Activated naive CD4-positive, alpha-beta T cell treated with anti-CD3 and anti-CD28 coated beads for 36 hours (primary cell): ENCODE measurements at regions of chr2 and their contacts with region 1.

Region 1: DNA sequence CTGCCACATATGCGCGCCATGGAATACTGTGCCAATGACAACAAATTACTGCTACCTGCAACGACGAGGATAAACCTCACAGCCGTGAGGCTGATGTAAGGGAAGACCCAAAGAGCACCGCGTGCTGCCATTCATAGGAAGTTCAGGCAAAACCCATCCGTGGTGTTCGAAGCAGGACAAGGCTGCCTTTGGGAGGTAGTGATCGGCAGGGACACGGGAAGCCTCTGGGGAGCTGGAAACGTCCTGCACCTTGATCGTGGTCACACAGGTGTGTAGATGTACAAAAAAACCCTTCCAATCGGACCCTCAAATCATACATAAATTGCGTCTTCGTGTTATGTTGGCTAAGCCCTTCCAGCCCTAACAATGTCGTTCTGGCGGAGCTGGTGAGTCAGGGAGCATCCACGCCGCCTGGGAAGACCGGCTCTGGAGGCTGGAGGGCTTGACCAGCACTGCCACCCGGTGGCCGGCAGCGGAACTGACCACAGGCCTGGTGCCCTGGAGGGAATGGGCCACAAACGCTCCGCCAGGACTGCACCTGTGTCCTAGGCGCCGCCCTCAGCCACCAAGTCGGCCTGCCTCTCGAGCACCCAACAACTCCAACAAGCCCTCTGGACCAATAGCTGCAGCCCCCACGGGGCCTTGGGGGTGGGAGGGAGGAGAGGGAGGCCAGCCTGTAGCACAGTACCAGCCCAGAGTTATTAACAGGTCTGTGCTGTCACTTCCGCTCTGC is 4.1 kb upstream of the NEURL3 start:
- DNase-seq: peak; percentile 84
- H3K4me3 Mint-ChIP-seq: no peak overlapping the region
- H3K27ac Mint-ChIP-seq: no peak overlapping the region
- H3K4me1 Mint-ChIP-seq: peaks cover 17% of the 10 kb centered on the region
- H3K27me3 Mint-ChIP-seq: peaks cover 8% of the 10 kb centered on the region

Region 2: GRCh38 chr2:95709831-95710230 is 799.4 kb before region 1 on chr2:
- CTCF ChIA-PET with region 1: no interaction called
- intact Hi-C with region 1: no loop called
- DNase-seq: no peak
- H3K4me3 Mint-ChIP-seq: no peak overlapping the region
- H3K27ac Mint-ChIP-seq: no peak overlapping the region
- H3K4me1 Mint-ChIP-seq: no peaks in the 10 kb centered on the region
- H3K27me3 Mint-ChIP-seq: no peaks in the 10 kb centered on the region

Region 3: DNA sequence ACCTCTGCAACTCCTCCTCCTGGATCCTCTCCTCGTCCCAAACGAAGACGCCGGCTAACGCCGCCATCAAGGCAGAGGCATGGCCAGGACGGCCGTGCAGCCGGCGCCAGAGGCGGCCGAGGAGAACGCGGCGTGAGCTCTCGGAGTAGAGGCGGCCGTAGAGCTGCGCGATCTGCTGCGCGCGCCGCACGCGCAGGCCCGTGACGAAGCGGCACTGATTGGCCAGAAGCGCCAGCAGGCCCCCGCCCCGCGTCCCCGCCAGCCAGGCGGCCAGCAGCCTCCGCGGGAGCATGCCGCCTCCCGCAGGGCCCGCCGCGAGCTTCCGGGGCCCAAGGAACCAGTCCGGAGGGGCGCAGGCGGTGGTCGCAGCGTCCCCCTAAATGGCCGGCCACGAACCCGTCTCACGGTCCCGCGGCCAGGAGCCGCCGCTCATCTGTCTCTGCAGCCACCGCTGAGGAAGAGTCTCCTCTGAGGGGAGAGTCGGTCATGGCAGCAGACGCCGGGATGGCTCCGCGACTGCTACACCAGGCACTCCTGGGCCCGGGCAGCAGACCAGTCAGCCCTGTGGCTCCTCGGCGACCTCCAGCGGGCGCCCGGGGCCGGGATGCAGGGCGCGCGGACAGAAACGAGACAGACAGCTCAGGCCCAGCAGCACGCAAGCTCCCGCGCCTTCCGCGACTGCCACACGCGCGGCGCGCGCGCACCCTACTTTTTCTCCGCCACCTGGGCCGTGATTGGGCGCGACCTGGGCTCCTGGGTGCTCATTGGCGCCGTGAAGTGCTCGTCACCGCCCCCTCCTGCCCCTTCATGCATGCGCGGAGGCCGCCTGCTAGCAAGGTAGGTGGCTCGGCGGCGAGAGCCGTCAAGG is 300.9 kb before region 1 on chr2 and contains the start of gene STARD7:
- CTCF ChIA-PET with region 1: no interaction called
- intact Hi-C with region 1: loop called (anchors 5 kb)
- DNase-seq: peak; percentile 98
- H3K4me3 Mint-ChIP-seq: peak within 1 kb of the TSS; percentile 92
- H3K27ac Mint-ChIP-seq: peak within 1 kb of the TSS; percentile 88
- H3K4me1 Mint-ChIP-seq: peaks cover 48% of the 10 kb centered on the region
- H3K27me3 Mint-ChIP-seq: no peaks in the 10 kb centered on the region
- total RNA-seq, gene STARD7: 84.7 to 87.6 TPM

Region 4: GRCh38 chr2:96320728-96321622 is 188.3 kb before region 1 on chr2:
- CTCF ChIA-PET with region 1: interaction called, 3 read pairs
- intact Hi-C with region 1: loop called (anchors 2 kb)
- DNase-seq: peak; percentile 36
- H3K4me3 Mint-ChIP-seq: peak overlapping the region; percentile 88
- H3K27ac Mint-ChIP-seq: peak overlapping the region; percentile 39
- H3K4me1 Mint-ChIP-seq: peaks cover 41% of the 10 kb centered on the region
- H3K27me3 Mint-ChIP-seq: peaks cover 2% of the 10 kb centered on the region

Region 5: DNA sequence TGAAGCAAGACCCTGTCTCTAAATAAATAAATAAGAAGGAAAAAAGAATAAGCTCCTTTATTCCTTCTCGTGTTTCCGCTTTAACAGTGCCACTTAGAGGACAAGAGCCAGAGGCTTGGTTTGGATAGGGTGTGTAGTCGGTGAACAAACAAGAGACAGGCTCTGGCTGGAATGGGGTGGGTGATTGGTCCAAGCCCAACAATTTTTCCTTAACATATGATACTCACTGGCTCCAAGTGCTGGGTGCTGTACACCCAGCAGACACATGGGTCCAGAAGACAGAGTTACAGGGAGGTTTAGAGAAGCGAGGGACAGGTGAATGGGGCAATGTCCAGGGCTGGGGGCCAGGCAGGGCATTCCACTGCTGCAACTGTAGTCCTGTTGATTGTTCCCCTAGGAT is 96.0 kb before region 1 on chr2:
- CTCF ChIA-PET with region 1: interaction called, 195 read pairs
- intact Hi-C with region 1: no loop called
- DNase-seq: no peak
- H3K4me3 Mint-ChIP-seq: no peak overlapping the region
- H3K27ac Mint-ChIP-seq: no peak overlapping the region
- H3K4me1 Mint-ChIP-seq: peaks cover 7% of the 10 kb centered on the region
- H3K27me3 Mint-ChIP-seq: no peaks in the 10 kb centered on the region

Region 6: GRCh38 chr2:96495982-96496629 is 13.2 kb before region 1 on chr2:
- CTCF ChIA-PET with region 1: interaction called, 12 read pairs
- intact Hi-C with region 1: no loop called
- DNase-seq: no peak
- H3K4me3 Mint-ChIP-seq: no peak overlapping the region
- H3K27ac Mint-ChIP-seq: peak overlapping the region; percentile 46
- H3K4me1 Mint-ChIP-seq: peaks cover 34% of the 10 kb centered on the region
- H3K27me3 Mint-ChIP-seq: no peaks in the 10 kb centered on the region

Region 7: GRCh38 chr2:96554293-96555145 is 45.2 kb after region 1 on chr2:
- CTCF ChIA-PET with region 1: interaction called, 32 read pairs
- intact Hi-C with region 1: loop called (anchors 1 kb)
- DNase-seq: peak; percentile 73
- H3K4me3 Mint-ChIP-seq: peak overlapping the region; percentile 52
- H3K27ac Mint-ChIP-seq: peak overlapping the region; percentile 88
- H3K4me1 Mint-ChIP-seq: peaks cover 34% of the 10 kb centered on the region
- H3K27me3 Mint-ChIP-seq: no peaks in the 10 kb centered on the region

Region 8: GRCh38 chr2:96760036-96760985 is 251.0 kb after region 1 on chr2 and contains the start of gene CNNM4:
- CTCF ChIA-PET with region 1: no interaction called
- intact Hi-C with region 1: no loop called
- DNase-seq: peak; percentile 94
- H3K4me3 Mint-ChIP-seq: peak within 1 kb of the TSS; percentile 81
- H3K27ac Mint-ChIP-seq: peak within 1 kb of the TSS; percentile 70
- H3K4me1 Mint-ChIP-seq: peaks cover 48% of the 10 kb centered on the region
- H3K27me3 Mint-ChIP-seq: no peaks in the 10 kb centered on the region
- total RNA-seq, gene CNNM4: 5.6 to 6.0 TPM